ENCODE measurements at regions of chr2 and their contacts with region 1.

Region 1: GRCh38 chr2:196453613-196454047 is 185.9 kb upstream of the CCDC150 start:
- H3K4me3 ChIP-seq: no peak overlapping the region
- H3K27ac ChIP-seq: no peak overlapping the region
- H3K4me1 ChIP-seq: no peaks in the 10 kb centered on the region
- CTCF ChIP-seq: peak; percentile 39; the same call in 1 of the 2 replicates

Region 2: GRCh38 chr2:196076778-196077568 is 376.7 kb before region 1 on chr2:
- CTCF ChIA-PET with region 1: interaction called, 31 read pairs
- POLR2A ChIA-PET with region 1: no interaction called
- H3K4me3 ChIP-seq: no peak overlapping the region
- H3K27ac ChIP-seq: no peak overlapping the region
- H3K4me1 ChIP-seq: no peaks in the 10 kb centered on the region
- CTCF ChIP-seq: no peak

Region 3: GRCh38 chr2:196293751-196294512 is 159.7 kb before region 1 on chr2:
- CTCF ChIA-PET with region 1: interaction called, 34 read pairs
- POLR2A ChIA-PET with region 1: no interaction called
- H3K4me3 ChIP-seq: no peak overlapping the region
- H3K27ac ChIP-seq: no peak overlapping the region
- H3K4me1 ChIP-seq: peaks cover 5% of the 10 kb centered on the region; the same call in 1 of the 2 replicates
- CTCF ChIP-seq: no peak

Region 4: GRCh38 chr2:196307775-196308305 is 145.8 kb before region 1 on chr2:
- CTCF ChIA-PET with region 1: interaction called, 13 read pairs
- POLR2A ChIA-PET with region 1: no interaction called
- H3K4me3 ChIP-seq: no peak overlapping the region
- H3K27ac ChIP-seq: no peak overlapping the region
- H3K4me1 ChIP-seq: 0 out of 2 replicates have a peak, but pooled peaks cover 4% of the 10 kb centered on the region
- CTCF ChIP-seq: no peak

Region 5: DNA sequence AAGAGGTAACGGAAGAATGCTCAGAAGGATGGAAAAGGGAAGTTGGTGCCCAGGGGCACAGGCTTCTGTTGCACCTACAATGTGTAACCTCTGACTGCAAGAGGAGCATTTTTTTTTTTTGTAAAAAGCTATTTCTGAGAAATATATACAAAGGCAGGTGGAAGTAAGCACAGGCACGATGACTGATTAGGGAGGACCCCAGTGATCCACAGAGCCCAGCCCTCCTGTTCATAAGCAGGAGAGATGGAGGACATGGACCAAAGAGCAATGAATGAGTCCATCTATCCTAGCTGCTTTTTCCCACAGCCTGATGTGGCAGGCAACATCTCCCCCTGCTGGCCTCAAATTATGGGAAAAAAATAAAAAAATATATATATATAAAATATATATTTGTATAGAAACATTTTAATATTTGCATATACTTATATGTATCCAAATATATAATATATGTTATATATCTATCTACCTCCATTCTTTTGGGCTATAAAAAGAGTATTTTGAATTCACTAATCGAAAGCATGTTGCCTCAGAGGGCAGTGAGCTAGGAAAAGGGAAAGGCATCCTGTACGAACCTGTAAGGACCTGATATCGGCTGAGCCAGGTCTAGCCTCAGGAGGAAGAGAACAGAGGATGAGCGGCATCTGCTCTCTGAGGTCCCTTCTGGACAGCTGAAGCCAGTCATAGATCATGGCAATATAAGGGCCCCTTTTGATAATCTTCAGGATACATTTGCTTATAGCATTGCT is 116.2 kb before region 1 on chr2:
- CTCF ChIA-PET with region 1: interaction called, 14 read pairs
- POLR2A ChIA-PET with region 1: no interaction called
- H3K4me3 ChIP-seq: no peak overlapping the region
- H3K27ac ChIP-seq: no peak overlapping the region
- H3K4me1 ChIP-seq: no peaks in the 10 kb centered on the region
- CTCF ChIP-seq: no peak

Region 6: GRCh38 chr2:196413821-196414274 is 39.8 kb before region 1 on chr2:
- CTCF ChIA-PET with region 1: no interaction called
- POLR2A ChIA-PET with region 1: no interaction called
- H3K4me3 ChIP-seq: no peak overlapping the region
- H3K27ac ChIP-seq: no peak overlapping the region
- H3K4me1 ChIP-seq: no peaks in the 10 kb centered on the region
- CTCF ChIP-seq: no peak

Region 7: DNA sequence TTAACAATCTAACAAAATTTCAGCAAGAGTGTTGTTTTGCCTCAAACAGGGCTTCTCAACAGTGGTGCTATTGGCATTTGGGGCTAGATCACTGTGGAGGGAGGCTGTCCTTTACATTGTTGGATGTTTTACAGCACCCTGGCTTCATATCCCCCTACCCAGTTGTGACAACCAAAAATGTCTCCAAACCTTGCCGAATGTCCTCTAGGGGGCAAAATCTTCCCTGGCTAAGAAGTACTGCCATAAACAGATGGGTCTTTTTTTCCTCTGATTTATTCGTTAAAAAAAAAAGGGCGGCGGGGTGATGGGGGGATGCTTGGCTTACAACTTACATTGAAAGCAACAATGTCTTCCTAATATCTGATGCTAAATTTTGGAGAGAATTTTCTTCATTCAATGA is 21.7 kb before region 1 on chr2:
- CTCF ChIA-PET with region 1: interaction called, 14 read pairs
- POLR2A ChIA-PET with region 1: no interaction called
- H3K4me3 ChIP-seq: no peak overlapping the region
- H3K27ac ChIP-seq: no peak overlapping the region
- H3K4me1 ChIP-seq: no peaks in the 10 kb centered on the region
- CTCF ChIP-seq: no peak

Region 8: DNA sequence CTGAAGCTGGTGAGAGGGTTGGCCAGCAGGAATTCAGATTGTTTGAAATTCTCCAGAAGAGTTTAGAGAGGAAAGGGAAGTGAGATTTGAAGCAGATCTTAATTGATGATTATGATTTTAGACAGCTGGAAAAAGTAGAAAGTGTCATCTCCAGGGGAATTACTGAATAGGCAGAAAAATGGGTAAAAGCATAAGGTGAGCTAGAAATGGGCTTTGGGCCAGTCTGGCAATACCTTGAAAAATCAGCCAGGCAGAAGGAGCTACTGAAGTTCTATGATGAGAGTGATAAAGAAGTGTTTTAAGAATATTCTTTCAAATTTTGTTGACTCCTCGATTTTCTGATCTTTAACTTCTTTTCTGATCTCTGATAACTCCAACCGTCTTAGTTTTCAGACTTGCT is 13.0 kb after region 1 on chr2:
- CTCF ChIA-PET with region 1: interaction called, 12 read pairs
- POLR2A ChIA-PET with region 1: no interaction called
- H3K4me3 ChIP-seq: no peak overlapping the region
- H3K27ac ChIP-seq: no peak overlapping the region
- H3K4me1 ChIP-seq: no peaks in the 10 kb centered on the region
- CTCF ChIP-seq: no peak

Region 9: GRCh38 chr2:196854629-196855028 is 401.0 kb after region 1 on chr2:
- CTCF ChIA-PET with region 1: no interaction called
- POLR2A ChIA-PET with region 1: no interaction called
- H3K4me3 ChIP-seq: no peak overlapping the region
- H3K27ac ChIP-seq: no peak overlapping the region
- H3K4me1 ChIP-seq: peaks cover 11% of the 10 kb centered on the region; the same call in 1 of the 2 replicates
- CTCF ChIP-seq: no peak

Measured in HEK293 (cell line).